Activated B cell treated with CpG ODN at 0.5 μM for 24 hours (primary cell): ENCODE measurements at regions of chr13 and their contacts with region 1.

Region 1: DNA sequence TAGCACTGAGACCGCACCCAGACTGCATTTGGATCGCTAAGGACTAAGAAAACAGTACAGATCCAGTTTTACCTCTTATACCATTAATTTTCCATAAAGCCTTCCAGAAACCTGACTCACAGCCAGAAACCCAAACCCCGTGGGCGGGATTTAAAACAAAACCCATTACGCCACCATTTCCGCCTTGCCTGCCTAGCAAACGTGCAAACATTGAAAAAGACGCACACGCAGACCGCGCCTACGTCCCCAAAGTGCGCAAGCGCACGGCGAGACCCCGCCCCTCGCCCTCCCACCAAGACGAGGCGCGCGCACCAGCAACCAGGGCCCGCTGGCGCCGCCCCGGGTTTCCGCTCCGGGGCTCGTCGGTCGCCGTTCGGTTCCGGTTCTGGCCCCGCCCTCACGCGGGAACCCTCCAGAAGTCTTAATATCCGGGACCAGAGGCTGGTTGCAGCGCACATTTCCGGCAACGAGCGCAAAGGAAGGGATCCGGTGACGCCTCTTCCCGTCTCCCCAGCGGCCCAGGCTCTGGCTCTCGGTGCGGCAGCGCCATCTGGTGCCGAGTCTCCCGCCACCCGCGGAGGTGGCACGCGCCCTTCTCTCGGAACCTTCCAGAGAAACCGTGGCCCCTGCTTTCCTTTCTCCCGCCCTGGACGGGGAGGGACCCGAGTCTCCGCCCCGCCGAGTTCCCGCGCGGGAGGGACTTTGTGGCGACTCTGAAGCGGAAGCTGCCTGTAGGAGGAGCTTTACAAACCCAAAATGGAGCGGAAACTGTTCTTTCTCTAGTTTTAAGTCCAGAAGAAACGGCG is 256.9 kb upstream of the STARD13 start:
- DNase-seq: peak; percentile 98
- ATAC-seq: peak; percentile 83
- H3K4me3 Mint-ChIP-seq: peak overlapping the region; percentile 96
- H3K27ac Mint-ChIP-seq: peak overlapping the region; percentile 100
- H3K4me1 Mint-ChIP-seq: peaks cover 50% of the 10 kb centered on the region
- H3K27me3 Mint-ChIP-seq: no peaks in the 10 kb centered on the region
- CTCF ChIP-seq: no peak

Region 2: DNA sequence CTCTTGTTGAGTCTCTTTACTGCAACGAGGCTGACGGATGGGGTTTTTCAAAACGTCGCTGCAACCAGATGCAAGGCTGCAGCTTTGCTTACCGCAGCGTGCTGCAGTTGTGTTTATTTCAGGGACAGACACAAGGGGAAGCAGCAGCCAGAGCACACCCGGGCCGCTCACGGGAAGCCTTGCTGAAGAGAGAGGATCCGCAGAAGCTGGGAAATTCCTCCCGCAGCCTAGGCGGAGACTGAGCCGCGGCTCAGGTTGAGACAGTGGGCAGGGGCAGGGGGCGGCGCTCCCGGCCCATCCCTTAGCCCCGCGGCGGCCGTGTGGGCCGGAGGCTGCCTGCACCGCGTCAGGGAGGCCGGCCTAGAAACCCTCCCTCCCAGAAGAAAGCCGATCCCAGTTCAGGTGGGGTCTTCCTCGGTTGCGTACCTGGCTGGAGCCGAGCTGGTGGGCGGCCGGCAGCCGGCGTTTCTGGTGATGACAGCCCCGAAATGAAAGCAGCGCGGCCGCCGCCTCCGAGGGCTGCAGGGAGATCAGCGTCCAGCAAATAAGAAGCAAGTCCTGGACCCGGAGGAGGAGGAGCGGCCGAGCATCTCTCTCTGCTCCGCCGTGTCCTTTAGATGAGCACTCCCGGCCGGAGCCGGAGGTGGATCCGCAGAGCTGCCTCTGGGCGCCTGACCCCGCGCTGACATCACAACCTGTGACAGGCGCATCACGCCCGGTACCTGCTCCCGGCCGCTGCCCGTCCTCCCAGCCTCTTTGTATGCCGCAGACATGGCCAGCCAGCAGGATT is 1511.3 kb before region 1 on chr13 and contains the start of gene FRY:
- CTCF ChIA-PET with region 1: no interaction called
- POLR2A ChIA-PET with region 1: no interaction called
- intact Hi-C with region 1: loop called (anchors 10 kb)
- DNase-seq: peak; percentile 42
- ATAC-seq: peak; percentile 75
- H3K4me3 Mint-ChIP-seq: peak within 1 kb of the TSS; percentile 94
- H3K27ac Mint-ChIP-seq: peak within 1 kb of the TSS; percentile 61
- H3K4me1 Mint-ChIP-seq: peaks cover 26% of the 10 kb centered on the region
- H3K27me3 Mint-ChIP-seq: peaks cover 7% of the 10 kb centered on the region
- CTCF ChIP-seq: no peak
- total RNA-seq, gene FRY: 4.7 and 4.8 TPM in 2 replicates

Region 3: GRCh38 chr13:32538621-32539246 is 1003.8 kb before region 1 on chr13 and contains the start of gene N4BP2L2:
- CTCF ChIA-PET with region 1: no interaction called
- POLR2A ChIA-PET with region 1: no interaction called
- intact Hi-C with region 1: loop called (anchors 1 kb)
- DNase-seq: peak; percentile 77
- ATAC-seq: peak; percentile 96
- H3K4me3 Mint-ChIP-seq: peak within 1 kb of the TSS; percentile 99
- H3K27ac Mint-ChIP-seq: peak within 1 kb of the TSS; percentile 100
- H3K4me1 Mint-ChIP-seq: peaks cover 50% of the 10 kb centered on the region
- H3K27me3 Mint-ChIP-seq: no peaks in the 10 kb centered on the region
- CTCF ChIP-seq: no peak
- total RNA-seq, gene N4BP2L2: 118 and 153 TPM in 2 replicates

Region 4: GRCh38 chr13:32669030-32669646 is 873.3 kb before region 1 on chr13:
- CTCF ChIA-PET with region 1: no interaction called
- POLR2A ChIA-PET with region 1: no interaction called
- intact Hi-C with region 1: loop called (anchors 1 kb)
- DNase-seq: no peak
- ATAC-seq: no peak
- H3K4me3 Mint-ChIP-seq: no peak overlapping the region
- H3K27ac Mint-ChIP-seq: no peak overlapping the region
- H3K4me1 Mint-ChIP-seq: peaks cover 3% of the 10 kb centered on the region
- H3K27me3 Mint-ChIP-seq: no peaks in the 10 kb centered on the region
- CTCF ChIP-seq: no peak

Region 5: DNA sequence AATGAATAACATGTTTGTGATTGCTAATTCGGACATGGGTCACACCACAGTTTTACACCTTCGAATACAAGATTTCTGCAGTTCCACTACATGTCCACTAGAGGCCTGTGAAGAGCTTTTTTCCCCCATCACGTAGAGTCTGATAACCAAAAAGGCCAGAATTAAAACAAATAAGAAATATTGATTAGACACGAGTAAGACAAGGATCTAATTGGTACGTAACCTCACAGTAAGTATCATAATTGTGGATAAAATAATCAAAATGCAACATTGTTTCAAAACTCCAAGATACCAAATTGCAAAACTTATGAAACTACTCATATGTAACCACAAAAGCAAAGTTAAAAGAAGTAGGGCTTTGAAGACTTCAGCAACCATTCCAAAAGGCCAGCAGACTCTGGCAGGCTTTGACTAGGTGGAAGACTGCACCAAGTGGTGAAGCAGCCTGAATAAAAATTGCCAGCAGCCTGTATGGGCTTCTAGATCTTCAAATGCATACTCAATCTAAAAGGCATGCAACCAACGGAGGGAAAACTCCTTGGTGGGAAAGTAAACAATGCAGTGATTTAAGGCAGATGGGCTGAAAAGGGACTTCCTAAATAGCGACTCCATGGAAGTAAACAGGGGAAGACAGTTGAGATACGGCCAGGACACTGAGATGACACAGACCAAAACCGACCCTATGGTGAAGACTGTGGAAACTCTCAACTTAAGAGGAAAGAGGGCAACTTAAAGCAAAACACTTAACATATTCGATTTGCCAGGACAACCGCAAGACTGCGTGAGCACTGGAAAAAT is 313.6 kb before region 1 on chr13:
- CTCF ChIA-PET with region 1: interaction called, 5 read pairs
- POLR2A ChIA-PET with region 1: interaction called, 5 read pairs
- intact Hi-C with region 1: loop called (anchors 1 kb)
- DNase-seq: no peak
- ATAC-seq: peak; percentile 62
- H3K4me3 Mint-ChIP-seq: no peak overlapping the region
- H3K27ac Mint-ChIP-seq: no peak overlapping the region
- H3K4me1 Mint-ChIP-seq: peaks cover 2% of the 10 kb centered on the region
- H3K27me3 Mint-ChIP-seq: peaks cover 4% of the 10 kb centered on the region
- CTCF ChIP-seq: peak; percentile 97

Region 6: DNA sequence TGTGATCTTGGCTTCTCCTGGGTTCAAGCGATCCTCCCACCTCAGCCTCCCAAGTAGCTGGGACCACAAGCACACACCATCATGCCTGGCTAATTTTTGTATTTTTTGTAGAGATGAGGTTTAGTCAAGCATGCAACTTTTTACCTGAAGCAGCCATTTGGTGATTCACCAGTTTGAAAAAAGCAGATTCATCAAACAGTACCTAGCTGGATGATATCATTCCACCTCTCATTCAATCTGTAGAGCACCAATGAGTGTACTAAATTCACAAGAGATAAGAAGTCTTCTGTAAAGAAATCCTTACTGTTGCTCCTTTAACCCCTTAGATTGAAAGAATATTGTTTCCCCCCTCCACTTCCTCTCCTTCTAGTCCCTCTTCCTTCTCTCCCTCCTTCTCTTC is 14.3 kb after region 1 on chr13:
- CTCF ChIA-PET with region 1: no interaction called
- POLR2A ChIA-PET with region 1: no interaction called
- intact Hi-C with region 1: no loop called
- DNase-seq: no peak
- ATAC-seq: no peak
- H3K4me3 Mint-ChIP-seq: no peak overlapping the region
- H3K27ac Mint-ChIP-seq: no peak overlapping the region
- H3K4me1 Mint-ChIP-seq: no peaks in the 10 kb centered on the region
- H3K27me3 Mint-ChIP-seq: no peaks in the 10 kb centered on the region
- CTCF ChIP-seq: no peak

Region 7: DNA sequence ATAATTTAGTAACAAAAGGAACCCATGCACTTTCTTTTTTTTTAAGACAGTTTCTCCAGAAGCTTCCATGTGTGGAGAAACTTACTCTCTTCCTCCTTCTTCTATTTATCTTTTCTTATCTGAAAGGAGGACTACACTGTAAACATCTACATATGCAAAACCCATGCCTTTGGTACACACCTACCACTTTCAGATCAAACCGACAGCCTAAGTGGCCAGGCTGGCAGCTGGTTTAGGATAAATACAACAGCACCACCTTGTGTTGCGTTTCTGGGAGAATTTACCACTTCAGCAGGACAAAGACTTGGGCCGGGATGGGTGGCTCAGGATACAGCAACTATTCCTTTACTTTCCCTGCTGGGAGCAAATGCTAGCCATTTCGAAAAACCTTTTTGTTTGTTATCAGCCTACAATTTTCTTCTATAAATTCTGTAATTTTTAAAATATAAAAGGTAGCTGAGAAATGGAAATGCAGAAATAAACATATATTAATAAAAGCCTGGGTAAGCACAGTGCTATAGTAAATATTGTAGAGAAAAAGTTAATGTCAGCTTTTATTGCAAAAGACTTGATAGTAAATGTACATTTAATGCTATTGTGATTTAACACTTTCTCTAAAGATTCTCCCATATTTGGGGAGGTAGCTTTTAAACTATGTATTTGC is 181.4 kb after region 1 on chr13:
- CTCF ChIA-PET with region 1: interaction called, 12 read pairs
- POLR2A ChIA-PET with region 1: interaction called, 7 read pairs
- intact Hi-C with region 1: loop called (anchors 1 kb)
- DNase-seq: no peak
- ATAC-seq: peak; percentile 72
- H3K4me3 Mint-ChIP-seq: no peak overlapping the region
- H3K27ac Mint-ChIP-seq: no peak overlapping the region
- H3K4me1 Mint-ChIP-seq: peaks cover 21% of the 10 kb centered on the region
- H3K27me3 Mint-ChIP-seq: peaks cover 21% of the 10 kb centered on the region
- CTCF ChIP-seq: no peak

Region 8: GRCh38 chr13:35164324-35164932 is 1621.9 kb after region 1 on chr13:
- CTCF ChIA-PET with region 1: no interaction called
- POLR2A ChIA-PET with region 1: no interaction called
- intact Hi-C with region 1: loop called (anchors 5 kb)
- DNase-seq: no peak
- ATAC-seq: peak; percentile 52
- H3K4me3 Mint-ChIP-seq: no peak overlapping the region
- H3K27ac Mint-ChIP-seq: no peak overlapping the region
- H3K4me1 Mint-ChIP-seq: peaks cover 8% of the 10 kb centered on the region
- H3K27me3 Mint-ChIP-seq: no peaks in the 10 kb centered on the region
- CTCF ChIP-seq: peak; percentile 63